ENCODE measurements at regions of chr17 and their contacts with region 1.

Region 1: DNA sequence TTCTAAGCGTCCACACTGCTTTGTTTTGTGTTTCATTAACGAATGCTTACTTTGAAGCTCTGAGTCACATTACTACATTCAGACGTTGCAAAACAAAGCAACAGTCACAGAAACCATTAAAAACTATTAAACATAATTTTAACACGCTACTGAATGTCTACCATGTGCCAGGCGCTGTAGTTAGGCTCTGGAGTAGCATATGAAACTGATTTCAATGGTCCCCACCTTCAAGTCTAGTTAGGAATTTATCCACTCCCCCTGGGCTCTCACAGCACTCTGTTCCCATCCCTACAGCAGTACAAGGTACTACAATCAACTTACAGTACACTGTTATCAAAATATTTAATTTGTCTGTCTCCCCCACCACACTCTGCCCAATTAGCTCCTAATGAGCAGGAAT is 631 bp downstream of the UTP6 start:
- DNase-seq: no peak
- H3K4me3 Mint-ChIP-seq: no peak overlapping the region
- H3K27ac Mint-ChIP-seq: no peak overlapping the region
- H3K4me1 Mint-ChIP-seq: peaks cover 18% of the 10 kb centered on the region
- H3K27me3 Mint-ChIP-seq: no peaks in the 10 kb centered on the region

Region 2: DNA sequence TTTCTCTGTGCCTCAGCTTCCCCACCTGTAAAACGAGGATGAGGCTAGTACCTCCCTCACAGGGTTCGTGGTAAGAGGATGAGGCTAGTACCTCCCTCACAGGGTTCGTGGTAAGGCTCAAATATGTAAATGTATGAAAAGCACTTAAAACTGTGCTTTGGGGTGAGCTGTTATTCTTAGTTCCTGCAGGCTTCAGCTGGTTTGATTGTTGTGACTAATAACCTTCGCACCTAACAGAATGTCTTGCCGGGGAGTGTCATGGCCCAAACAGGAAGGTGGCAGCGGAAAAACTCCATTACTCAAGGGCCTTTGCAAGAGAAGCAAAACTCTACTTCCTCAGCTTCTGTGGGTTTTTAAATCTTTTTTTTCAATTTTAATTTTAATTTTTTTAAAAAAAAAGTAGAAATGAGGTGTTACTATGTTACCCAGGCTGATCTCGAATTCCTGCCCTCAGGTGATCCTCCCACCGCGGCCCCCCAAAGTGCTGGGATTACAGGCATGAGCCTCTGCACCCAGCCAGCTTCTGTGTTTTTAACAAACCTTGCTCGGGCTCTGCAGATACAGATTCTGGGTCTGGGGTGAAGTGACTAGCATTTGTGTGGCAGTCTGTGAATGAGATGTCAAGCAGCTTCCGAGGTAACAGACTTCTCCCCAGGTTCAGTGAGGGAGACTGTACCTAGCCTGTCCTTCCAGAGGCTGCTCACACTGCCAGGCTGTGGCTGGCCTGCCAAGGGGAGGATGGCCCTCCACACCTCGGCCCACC is 406.4 kb before region 1 on chr17:
- CTCF ChIA-PET with region 1: no interaction called
- POLR2A ChIA-PET with region 1: no interaction called
- intact Hi-C with region 1: loop called (anchors 2 kb)
- DNase-seq: peak; percentile 83
- H3K4me3 Mint-ChIP-seq: peak overlapping the region; percentile 66
- H3K27ac Mint-ChIP-seq: peak overlapping the region; percentile 96
- H3K4me1 Mint-ChIP-seq: peaks cover 88% of the 10 kb centered on the region
- H3K27me3 Mint-ChIP-seq: no peaks in the 10 kb centered on the region

Region 3: GRCh38 chr17:31787857-31788570 is 112.9 kb before region 1 on chr17:
- CTCF ChIA-PET with region 1: no interaction called
- POLR2A ChIA-PET with region 1: no interaction called
- intact Hi-C with region 1: no loop called
- DNase-seq: no peak
- H3K4me3 Mint-ChIP-seq: no peak overlapping the region
- H3K27ac Mint-ChIP-seq: no peak overlapping the region
- H3K4me1 Mint-ChIP-seq: no peaks in the 10 kb centered on the region
- H3K27me3 Mint-ChIP-seq: peaks cover 4% of the 10 kb centered on the region

Region 4: DNA sequence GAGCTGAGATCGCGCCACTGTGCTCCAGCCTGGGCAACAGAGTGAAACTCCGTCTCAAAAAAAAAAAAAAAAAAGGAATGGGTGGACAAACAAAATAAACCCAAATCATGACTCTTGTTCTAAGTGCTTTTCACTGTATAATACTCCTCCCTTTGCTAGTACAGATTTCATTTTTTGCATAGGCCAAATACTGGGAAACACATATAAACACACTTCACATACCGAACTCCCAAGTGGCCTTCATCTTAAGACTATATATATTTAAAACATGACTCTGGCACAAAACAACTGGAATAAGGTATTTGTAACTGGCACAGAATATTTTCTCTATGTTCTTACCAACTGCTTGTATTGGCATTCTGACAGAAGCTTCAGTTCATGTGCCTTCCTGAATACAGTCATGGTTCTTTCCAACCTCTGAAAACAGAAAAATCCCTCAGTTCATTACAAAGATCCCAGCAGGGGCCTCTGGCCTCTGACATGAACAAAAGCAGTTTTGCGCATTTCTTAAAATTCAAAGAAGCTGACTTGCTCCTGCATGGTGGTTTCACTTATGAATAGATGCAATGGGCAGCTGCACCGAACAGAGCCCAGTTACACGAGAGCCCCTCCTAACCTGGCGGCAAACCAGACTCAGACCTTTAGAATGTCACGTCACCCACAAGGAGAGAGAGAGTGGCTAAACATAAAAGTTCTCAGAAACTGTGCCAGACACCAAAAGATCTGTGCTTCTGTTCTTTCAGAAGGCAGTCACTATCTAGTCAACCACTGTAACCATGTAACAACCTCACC is 22.8 kb before region 1 on chr17:
- CTCF ChIA-PET with region 1: interaction called, 4 read pairs
- POLR2A ChIA-PET with region 1: interaction called, 3 read pairs
- intact Hi-C with region 1: loop called (anchors 1 kb)
- DNase-seq: peak; percentile 54
- H3K4me3 Mint-ChIP-seq: no peak overlapping the region
- H3K27ac Mint-ChIP-seq: peak overlapping the region; percentile 87
- H3K4me1 Mint-ChIP-seq: peaks cover 14% of the 10 kb centered on the region
- H3K27me3 Mint-ChIP-seq: no peaks in the 10 kb centered on the region

Region 5: GRCh38 chr17:31931756-31932155 is 30.9 kb after region 1 on chr17:
- CTCF ChIA-PET with region 1: interaction called, 6 read pairs
- POLR2A ChIA-PET with region 1: interaction called, 11 read pairs
- intact Hi-C with region 1: loop called (anchors 1 kb)
- DNase-seq: no peak
- H3K4me3 Mint-ChIP-seq: no peak overlapping the region
- H3K27ac Mint-ChIP-seq: no peak overlapping the region
- H3K4me1 Mint-ChIP-seq: peaks cover 5% of the 10 kb centered on the region
- H3K27me3 Mint-ChIP-seq: no peaks in the 10 kb centered on the region

Region 6: DNA sequence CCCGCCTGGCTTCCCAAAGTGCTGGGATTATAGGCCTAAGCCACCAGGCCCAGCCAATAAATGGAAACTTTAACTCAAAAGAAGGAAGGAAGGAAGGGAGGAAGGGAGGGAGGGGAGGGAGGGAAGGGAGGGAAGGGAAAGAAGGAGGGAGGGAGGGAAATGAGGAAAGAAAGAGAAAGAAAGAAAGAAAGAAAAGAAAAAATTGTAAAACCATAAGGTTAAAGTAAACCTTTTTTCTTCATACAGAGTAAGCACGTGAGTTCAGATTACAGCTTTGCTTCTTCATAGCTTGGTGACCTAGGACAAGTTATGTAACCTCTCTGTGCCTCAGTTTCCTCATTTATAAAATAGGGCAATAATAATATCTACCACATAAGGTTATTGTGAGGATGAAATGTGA is 132.3 kb after region 1 on chr17:
- CTCF ChIA-PET with region 1: no interaction called
- POLR2A ChIA-PET with region 1: no interaction called
- intact Hi-C with region 1: no loop called
- DNase-seq: no peak
- H3K4me3 Mint-ChIP-seq: no peak overlapping the region
- H3K27ac Mint-ChIP-seq: no peak overlapping the region
- H3K4me1 Mint-ChIP-seq: peaks cover 2% of the 10 kb centered on the region
- H3K27me3 Mint-ChIP-seq: no peaks in the 10 kb centered on the region

Region 7: GRCh38 chr17:32136856-32137255 is 236.0 kb after region 1 on chr17:
- CTCF ChIA-PET with region 1: interaction called, 4 read pairs
- POLR2A ChIA-PET with region 1: no interaction called
- intact Hi-C with region 1: loop called (anchors 5 kb)
- DNase-seq: peak; percentile 14
- H3K4me3 Mint-ChIP-seq: no peak overlapping the region
- H3K27ac Mint-ChIP-seq: no peak overlapping the region
- H3K4me1 Mint-ChIP-seq: peaks cover 16% of the 10 kb centered on the region
- H3K27me3 Mint-ChIP-seq: no peaks in the 10 kb centered on the region